Stomach (tissue), 19 donors: ENCODE measurements at regions of chr1 and their contacts with region 1.

Region 1: DNA sequence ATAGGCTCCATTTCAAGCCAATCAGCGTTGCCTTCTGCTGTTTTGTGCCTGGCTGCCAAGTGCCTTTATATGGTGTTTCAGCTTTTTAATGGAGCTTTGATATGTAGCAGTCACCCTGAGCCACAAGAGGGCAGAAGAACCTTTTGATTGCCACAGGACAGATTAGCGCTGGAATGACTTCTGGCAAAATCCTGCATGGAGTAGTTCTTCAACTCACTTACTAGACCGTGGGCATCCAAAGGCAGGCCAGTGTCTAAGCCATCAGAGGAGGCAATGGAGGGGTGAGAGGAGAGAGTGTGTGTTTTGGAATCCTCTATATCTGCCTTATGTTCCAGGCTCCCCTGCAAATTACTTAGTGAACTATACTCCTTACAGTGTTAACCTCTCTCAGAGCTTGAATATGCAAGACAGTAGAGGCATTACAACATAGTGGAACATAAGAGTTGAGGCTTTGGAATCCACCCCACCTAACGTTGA is 56.2 kb downstream of the ST3GAL3 start:
- DNase-seq: peak; percentile 65 to 95
- H3K4me3 ChIP-seq: no peak overlapping the region
- H3K27ac ChIP-seq: no peak overlapping the region
- H3K4me1 ChIP-seq: peaks cover 0 to 16% (median 7%) of the 10 kb centered on the region in 4 donors
- H3K27me3 ChIP-seq: no peaks in the 10 kb centered on the region
- CTCF ChIP-seq: peak in 5 of 7 experiments; percentile 73 to 93 (median 80)
- EP300 ChIP-seq: no peak
- POLR2A ChIP-seq: no peak

Region 2: DNA sequence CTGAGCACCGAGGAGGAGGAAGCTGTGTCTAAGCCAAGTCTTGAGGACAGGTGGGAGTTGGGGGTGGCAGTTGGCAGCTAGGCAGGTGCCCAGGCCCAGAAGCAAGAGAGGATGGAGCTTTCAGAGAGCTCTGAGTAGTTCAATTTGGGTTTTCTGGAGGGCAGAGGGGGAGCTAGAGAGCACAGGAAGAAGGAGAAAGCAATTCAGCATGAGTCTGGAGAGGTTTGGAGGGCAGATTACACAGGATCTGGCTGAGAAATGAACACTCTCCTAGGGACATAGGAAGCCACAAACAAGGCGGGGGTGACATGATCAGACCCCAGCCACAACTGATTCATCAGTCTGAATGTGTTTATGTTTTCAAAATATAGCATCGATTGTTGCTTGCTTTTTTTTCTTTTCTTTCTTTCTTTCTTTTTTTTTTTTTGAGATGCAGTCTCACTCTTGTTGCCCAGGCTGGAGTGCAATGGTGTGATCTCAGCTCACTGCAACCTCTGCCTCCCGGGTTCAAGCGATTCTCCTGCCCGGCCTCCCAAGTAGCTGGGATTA is 209.0 kb before region 1 on chr1:
- intact Hi-C with region 1: no loop called
- DNase-seq: peak in 1 of 2 donors; percentile 71
- H3K4me3 ChIP-seq: no peak overlapping the region
- H3K27ac ChIP-seq: peak overlapping the region in 2 of 5 donors; percentile 34 to 92
- H3K4me1 ChIP-seq: peaks cover 56 to 82% (median 68%) of the 10 kb centered on the region in 4 donors
- H3K27me3 ChIP-seq: no peaks in the 10 kb centered on the region
- CTCF ChIP-seq: peak in 3 of 7 experiments; percentile 6 to 17 (median 14)
- EP300 ChIP-seq: no peak
- POLR2A ChIP-seq: no peak

Region 3: GRCh38 chr1:43934101-43934985 is 170.8 kb after region 1 on chr1:
- intact Hi-C with region 1: loop called (anchors 5 kb)
- DNase-seq: peak; percentile 68 to 89
- H3K4me3 ChIP-seq: peak overlapping the region; percentile 33 to 52 (median 46)
- H3K27ac ChIP-seq: peak overlapping the region in 2 of 5 donors; percentile 19 to 76
- H3K4me1 ChIP-seq: peaks cover 29 to 46% (median 40%) of the 10 kb centered on the region in 4 donors
- H3K27me3 ChIP-seq: peaks cover 0 to 26% (median 25%) of the 10 kb centered on the region in 3 donors
- CTCF ChIP-seq: peak in 6 of 7 experiments; percentile 19 to 83 (median 76)
- EP300 ChIP-seq: no peak
- POLR2A ChIP-seq: no peak